Dendritic cell treated with granulocyte-macrophage colony-stimulating factor and Interleukin-4, amounts not matched to agents 40 ng/mL and 50 ng/mL, for 4 days (primary cell): ENCODE measurements at regions of chr1 and their contacts with region 1.

Region 1: GRCh38 chr1:203340112-203340804 is 10.7 kb downstream of the FMOD start:
- H3K4me3 Mint-ChIP-seq: no peak overlapping the region
- H3K27ac Mint-ChIP-seq: no peak overlapping the region
- H3K4me1 Mint-ChIP-seq: peaks cover 21% of the 10 kb centered on the region
- H3K27me3 Mint-ChIP-seq: peaks cover 40% of the 10 kb centered on the region

Region 2: GRCh38 chr1:203440771-203441170 is 100.5 kb after region 1 on chr1:
- intact Hi-C with region 1: loop called (anchors 2 kb)
- H3K4me3 Mint-ChIP-seq: no peak overlapping the region
- H3K27ac Mint-ChIP-seq: no peak overlapping the region
- H3K4me1 Mint-ChIP-seq: peaks cover 4% of the 10 kb centered on the region
- H3K27me3 Mint-ChIP-seq: peaks cover 33% of the 10 kb centered on the region

Region 3: DNA sequence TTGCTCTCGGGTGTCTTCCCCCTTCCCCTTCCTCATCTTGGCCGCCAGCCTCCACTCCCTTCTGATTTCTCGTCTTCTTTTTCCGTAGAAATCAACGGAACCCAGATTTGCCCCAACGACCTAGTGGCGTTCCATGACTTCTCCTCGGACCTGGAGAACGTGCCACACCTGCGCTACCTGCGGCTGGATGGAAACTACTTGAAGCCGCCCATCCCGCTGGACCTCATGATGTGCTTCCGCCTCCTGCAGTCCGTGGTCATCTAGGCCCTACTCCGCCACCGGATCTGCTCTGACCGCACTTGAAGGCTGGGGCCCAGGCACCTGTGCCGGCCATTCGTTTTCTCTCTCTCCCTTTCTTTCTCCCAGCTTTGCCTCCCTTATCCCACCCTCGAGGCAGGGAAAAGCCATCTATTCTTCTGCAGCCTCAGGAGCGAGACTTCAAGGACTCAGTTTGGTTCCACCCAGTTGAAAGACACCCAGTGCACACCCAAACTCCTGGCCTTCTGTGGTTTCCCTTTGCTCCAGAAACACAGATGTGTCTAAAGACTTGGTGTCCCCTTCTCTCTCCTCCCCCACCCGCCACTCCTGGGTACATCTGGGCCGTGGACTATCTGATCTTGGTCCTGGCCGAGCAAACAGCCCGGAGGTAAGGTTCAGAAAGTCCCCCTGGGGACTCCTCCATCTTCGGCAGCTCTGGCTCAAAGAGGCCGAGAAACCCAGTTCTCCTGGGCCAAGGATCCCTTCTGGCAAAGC is 146.5 kb after region 1 on chr1:
- intact Hi-C with region 1: loop called (anchors 1 kb)
- H3K4me3 Mint-ChIP-seq: peak overlapping the region; percentile 73
- H3K27ac Mint-ChIP-seq: no peak overlapping the region
- H3K4me1 Mint-ChIP-seq: peaks cover 18% of the 10 kb centered on the region
- H3K27me3 Mint-ChIP-seq: peaks cover 7% of the 10 kb centered on the region

Region 4: DNA sequence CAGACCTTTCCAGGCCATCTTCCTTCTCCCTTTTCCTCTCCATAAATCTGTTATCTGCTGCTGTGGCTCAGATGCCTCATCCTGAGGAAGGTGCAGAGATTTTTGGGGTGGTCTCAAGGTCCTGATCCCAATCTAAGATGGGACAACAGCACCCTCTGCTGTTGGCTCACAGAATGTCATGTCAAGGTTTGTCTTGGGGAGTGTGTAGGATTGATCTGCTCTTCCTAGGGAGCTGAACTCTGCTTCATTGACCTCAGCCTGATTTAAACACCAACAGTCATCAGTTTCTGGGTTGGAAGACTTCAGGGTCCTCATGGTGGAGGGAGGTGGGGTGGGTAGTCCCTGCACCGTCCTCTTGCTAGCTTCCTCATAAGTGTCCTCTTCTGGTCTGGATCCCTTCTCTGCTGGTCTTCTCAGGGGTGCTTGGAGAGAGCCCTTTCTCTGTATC is 361.9 kb after region 1 on chr1:
- intact Hi-C with region 1: loop called (anchors 10 kb)
- H3K4me3 Mint-ChIP-seq: no peak overlapping the region
- H3K27ac Mint-ChIP-seq: no peak overlapping the region
- H3K4me1 Mint-ChIP-seq: no peaks in the 10 kb centered on the region
- H3K27me3 Mint-ChIP-seq: no peaks in the 10 kb centered on the region